Endothelial cell of umbilical vein (primary cell): ENCODE measurements at regions of chr17 and their contacts with region 1.

Region 1: DNA sequence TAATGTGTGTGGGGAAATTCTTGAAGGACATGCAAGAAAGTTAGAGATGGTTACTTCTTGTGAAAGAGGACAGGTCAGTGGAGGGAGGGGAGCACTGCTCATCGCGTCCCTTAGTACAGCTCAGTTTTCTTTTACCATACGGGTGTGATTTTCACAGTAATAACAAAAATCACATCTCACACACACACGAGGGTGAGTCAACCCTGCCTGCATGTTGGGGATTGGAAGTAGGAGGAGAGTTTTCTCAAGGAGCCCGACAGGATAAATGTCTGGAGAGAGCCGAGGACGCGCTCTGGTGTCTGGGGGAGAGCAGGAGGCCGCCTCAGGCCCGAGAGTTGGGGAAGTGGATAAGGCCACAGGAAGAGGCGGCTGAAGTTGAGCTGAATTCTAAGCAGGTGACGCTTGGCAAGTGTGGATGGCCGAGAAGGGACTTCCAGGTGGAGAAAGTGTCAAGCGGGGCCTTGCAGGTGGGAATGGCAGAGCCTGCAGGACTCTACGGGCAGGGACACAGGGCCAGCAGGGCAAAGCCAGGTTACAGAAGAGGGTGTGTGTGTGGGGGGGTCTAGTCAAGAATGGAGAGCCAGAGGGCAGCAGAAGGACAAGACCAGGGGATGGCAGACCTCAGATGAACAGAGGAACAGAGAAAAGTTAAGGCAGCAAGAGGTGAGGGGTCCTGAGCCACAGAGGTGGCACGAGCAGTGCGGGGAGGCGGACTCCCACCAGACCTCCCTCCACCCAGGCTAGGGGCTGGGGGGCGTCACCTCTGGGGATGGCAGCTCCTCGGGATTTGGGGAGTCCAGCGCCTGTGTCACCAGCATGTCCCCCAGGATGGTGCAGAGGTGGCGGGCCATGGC is 16.2 kb downstream of the PLCD3 start:
- DNase-seq: no peak
- H3K4me3 ChIP-seq: no peak overlapping the region
- H3K27ac ChIP-seq: no peak overlapping the region
- H3K4me1 ChIP-seq: no peaks in the 10 kb centered on the region
- H3K27me3 ChIP-seq: no peaks in the 10 kb centered on the region
- CTCF ChIP-seq: no peak
- POLR2A ChIP-seq: no peak

Region 2: DNA sequence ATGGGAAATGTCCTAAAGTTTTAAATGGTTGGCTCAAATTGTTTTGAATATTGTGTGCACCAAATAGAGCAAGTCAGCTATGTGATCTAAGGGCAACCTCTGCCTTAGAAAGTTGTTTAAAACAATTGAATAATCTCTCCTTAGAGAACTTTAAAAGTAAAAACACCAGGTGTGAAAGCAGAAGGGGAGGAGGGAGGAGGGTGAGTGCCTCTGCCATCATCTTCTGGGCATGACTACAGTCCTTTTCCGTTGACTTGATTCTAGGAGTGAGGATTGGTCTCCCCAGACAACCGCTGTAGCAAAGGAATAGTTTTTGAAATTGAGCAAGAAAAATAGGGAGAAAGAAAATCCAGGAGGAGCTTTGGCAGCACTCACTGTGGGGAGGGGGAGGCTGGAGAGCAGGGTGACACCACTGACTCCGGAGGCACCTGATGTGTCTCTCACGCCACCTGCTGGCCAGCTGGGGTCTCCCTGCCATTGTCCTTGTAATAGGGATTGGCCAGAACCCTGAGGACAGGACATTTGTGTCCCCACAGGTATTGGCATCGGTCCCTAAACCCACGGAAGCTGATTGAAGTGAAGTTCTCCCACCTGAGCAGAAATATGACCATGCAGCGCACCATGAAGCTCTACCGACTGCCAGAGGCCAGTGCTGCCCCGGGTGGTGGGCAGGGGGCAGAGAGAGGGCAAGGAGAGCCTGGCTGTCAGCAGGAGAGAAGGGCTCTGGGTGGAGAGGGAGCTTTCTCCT is 17.1 kb before region 1 on chr17:
- CTCF ChIA-PET with region 1: interaction called, 14 read pairs
- POLR2A ChIA-PET with region 1: no interaction called
- dilution Hi-C with region 1: no loop called
- intact Hi-C with region 1: no loop called
- DNase-seq: peak; percentile 73
- H3K4me3 ChIP-seq: no peak overlapping the region
- H3K27ac ChIP-seq: no peak overlapping the region
- H3K4me1 ChIP-seq: peaks cover under 1% of the 10 kb centered on the region
- H3K27me3 ChIP-seq: no peaks in the 10 kb centered on the region
- CTCF ChIP-seq: peak; percentile 84 to 91
- POLR2A ChIP-seq: no peak

Region 3: GRCh38 chr17:45172454-45173286 is 56.6 kb after region 1 on chr17:
- CTCF ChIA-PET with region 1: no interaction called
- POLR2A ChIA-PET with region 1: interaction called, 10 read pairs
- dilution Hi-C with region 1: no loop called
- intact Hi-C with region 1: no loop called
- DNase-seq: no peak
- H3K4me3 ChIP-seq: no peak overlapping the region
- H3K27ac ChIP-seq: no peak overlapping the region
- H3K4me1 ChIP-seq: peaks cover 14% of the 10 kb centered on the region
- H3K27me3 ChIP-seq: no peaks in the 10 kb centered on the region
- CTCF ChIP-seq: no peak
- POLR2A ChIP-seq: no peak